ENCODE measurements at regions of chr13 and their contacts with region 1.

Region 1: GRCh38 chr13:28636674-28637317 is 22.1 kb upstream of the POMP start:
- DNase-seq: peak; percentile 43
- H3K4me3 Mint-ChIP-seq: peak overlapping the region; percentile 42
- H3K27ac Mint-ChIP-seq: peak overlapping the region; percentile 29
- H3K4me1 Mint-ChIP-seq: peaks cover 16% of the 10 kb centered on the region
- H3K27me3 Mint-ChIP-seq: peaks cover 30% of the 10 kb centered on the region

Region 2: GRCh38 chr13:28324181-28324789 is 312.5 kb before region 1 on chr13:
- intact Hi-C with region 1: loop called (anchors 1 kb)
- DNase-seq: peak; percentile 30
- H3K4me3 Mint-ChIP-seq: no peak overlapping the region
- H3K27ac Mint-ChIP-seq: no peak overlapping the region
- H3K4me1 Mint-ChIP-seq: peaks cover 2% of the 10 kb centered on the region
- H3K27me3 Mint-ChIP-seq: peaks cover 5% of the 10 kb centered on the region

Region 3: DNA sequence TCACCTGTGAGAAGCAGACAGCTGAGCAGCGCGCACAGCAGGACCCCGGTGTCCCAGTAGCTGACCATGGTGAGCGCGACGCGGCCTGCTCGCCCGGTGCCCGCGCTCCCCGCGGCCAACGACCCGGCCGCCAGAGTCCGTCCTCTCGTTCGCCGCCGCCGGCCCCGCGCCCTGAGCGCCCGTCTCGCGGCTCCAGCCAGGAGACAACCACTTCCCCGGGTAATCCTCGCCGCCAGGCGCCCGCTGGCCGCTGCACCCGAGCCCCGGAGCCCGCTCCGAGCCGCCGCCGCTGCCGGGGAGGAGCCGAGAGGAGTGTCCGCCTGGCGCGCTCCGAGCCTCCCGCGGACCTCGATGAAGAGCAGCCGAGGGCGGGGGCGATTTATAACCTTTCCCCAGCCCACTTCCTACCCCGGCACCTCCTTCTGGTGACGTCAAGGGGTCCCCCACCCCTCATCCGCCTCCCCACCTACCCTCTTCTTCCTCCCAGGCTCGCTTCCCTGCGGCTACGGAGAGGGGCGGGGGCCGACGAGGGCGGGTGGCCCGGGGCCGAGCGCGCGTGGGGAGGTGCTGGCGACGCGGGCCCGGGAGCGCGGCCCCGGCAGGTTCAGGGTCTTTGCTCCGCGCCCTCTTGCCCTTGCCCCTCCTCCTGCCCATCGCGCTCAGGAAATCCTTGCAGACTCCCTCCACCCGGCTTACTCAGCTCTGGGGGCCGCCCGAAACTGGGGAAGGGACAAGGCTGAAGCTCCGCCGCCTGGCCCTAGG is 141.8 kb before region 1 on chr13 and contains the start of gene FLT1:
- intact Hi-C with region 1: loop called (anchors 5 kb)
- DNase-seq: peak; percentile 32
- H3K4me3 Mint-ChIP-seq: peak within 1 kb of the TSS; percentile 75
- H3K27ac Mint-ChIP-seq: no peak within 1 kb of the TSS
- H3K4me1 Mint-ChIP-seq: peaks cover 19% of the 10 kb centered on the region
- H3K27me3 Mint-ChIP-seq: peaks cover 53% of the 10 kb centered on the region
- total RNA-seq, gene FLT1: 29.9 and 32.4 TPM in 2 replicates

Region 4: DNA sequence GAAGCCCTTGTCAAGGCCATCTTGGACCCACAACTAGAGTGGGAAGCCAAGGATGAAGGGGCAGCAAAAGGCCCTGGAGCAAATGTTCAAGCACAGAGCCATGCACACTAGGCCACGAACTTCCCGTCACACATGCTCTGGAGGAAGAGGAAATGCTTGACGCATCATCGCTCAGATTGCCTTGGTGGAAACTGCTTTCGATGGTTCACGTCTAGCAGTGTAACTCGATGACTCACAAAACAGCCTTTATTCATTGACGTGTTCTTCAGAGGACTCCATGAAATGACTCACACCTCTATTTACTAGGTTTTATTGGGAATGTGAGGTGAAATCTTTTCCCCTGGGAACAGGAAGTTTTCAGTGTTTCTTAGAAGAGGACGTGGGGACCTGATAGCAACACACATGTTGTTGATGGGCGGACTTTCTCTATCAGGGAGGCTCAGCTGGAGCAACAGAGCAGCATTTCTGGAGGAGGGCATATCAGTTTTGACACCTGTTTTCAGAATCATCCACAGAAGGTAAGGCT is 62.1 kb before region 1 on chr13:
- intact Hi-C with region 1: loop called (anchors 2 kb)
- DNase-seq: no peak
- H3K4me3 Mint-ChIP-seq: no peak overlapping the region
- H3K27ac Mint-ChIP-seq: peak overlapping the region; percentile 82
- H3K4me1 Mint-ChIP-seq: peaks cover 16% of the 10 kb centered on the region
- H3K27me3 Mint-ChIP-seq: peaks cover 6% of the 10 kb centered on the region

Region 5: GRCh38 chr13:28666897-28667488 is 30.2 kb after region 1 on chr13:
- intact Hi-C with region 1: no loop called
- DNase-seq: no peak
- H3K4me3 Mint-ChIP-seq: no peak overlapping the region
- H3K27ac Mint-ChIP-seq: no peak overlapping the region
- H3K4me1 Mint-ChIP-seq: peaks cover 13% of the 10 kb centered on the region
- H3K27me3 Mint-ChIP-seq: no peaks in the 10 kb centered on the region

Region 6: GRCh38 chr13:28735481-28736029 is 98.8 kb after region 1 on chr13:
- intact Hi-C with region 1: no loop called
- DNase-seq: no peak
- H3K4me3 Mint-ChIP-seq: no peak overlapping the region
- H3K27ac Mint-ChIP-seq: no peak overlapping the region
- H3K4me1 Mint-ChIP-seq: no peaks in the 10 kb centered on the region
- H3K27me3 Mint-ChIP-seq: no peaks in the 10 kb centered on the region

Measured in activated T-helper 2 cell treated with anti-CD3 and anti-CD28 coated beads, Interferon-gamma antibody, Interleukin-2, Interleukin-4, amounts not matched to agents 10 μg/mL and 5 μg/mL and 100 μg/mL, durations not matched to agents 14 hours and 24 hours and 36 hours (primary cell).